Calu3 (cell line): ENCODE measurements at regions of chr7 and their contacts with region 1.

Region 1: DNA sequence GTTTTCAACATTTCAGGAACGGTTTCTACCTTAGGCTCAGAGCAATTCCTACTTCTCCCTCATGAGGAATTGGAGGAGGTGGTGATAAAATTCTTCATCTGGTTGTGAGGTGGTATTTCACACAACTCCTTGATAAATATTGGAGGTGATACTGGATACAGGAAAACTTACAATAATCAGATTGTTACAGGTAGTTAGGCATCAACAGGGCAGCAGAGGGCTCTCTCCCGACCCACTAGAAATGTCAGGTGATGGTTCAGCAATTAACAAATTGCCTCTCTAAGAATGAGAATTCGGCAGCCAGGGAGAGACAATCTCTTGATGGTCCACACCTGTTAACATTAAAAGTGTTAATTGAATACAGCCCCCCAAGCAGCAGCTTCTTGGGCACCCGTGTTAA is 22.6 kb downstream of the ZNF786 start:
- DNase-seq: peak; percentile 17
- H3K4me3 Mint-ChIP-seq: no peak overlapping the region
- H3K27ac Mint-ChIP-seq: no peak overlapping the region
- H3K4me1 Mint-ChIP-seq: no peaks in the 10 kb centered on the region
- H3K27me3 Mint-ChIP-seq: no peaks in the 10 kb centered on the region
- CTCF ChIP-seq: no peak

Region 2: DNA sequence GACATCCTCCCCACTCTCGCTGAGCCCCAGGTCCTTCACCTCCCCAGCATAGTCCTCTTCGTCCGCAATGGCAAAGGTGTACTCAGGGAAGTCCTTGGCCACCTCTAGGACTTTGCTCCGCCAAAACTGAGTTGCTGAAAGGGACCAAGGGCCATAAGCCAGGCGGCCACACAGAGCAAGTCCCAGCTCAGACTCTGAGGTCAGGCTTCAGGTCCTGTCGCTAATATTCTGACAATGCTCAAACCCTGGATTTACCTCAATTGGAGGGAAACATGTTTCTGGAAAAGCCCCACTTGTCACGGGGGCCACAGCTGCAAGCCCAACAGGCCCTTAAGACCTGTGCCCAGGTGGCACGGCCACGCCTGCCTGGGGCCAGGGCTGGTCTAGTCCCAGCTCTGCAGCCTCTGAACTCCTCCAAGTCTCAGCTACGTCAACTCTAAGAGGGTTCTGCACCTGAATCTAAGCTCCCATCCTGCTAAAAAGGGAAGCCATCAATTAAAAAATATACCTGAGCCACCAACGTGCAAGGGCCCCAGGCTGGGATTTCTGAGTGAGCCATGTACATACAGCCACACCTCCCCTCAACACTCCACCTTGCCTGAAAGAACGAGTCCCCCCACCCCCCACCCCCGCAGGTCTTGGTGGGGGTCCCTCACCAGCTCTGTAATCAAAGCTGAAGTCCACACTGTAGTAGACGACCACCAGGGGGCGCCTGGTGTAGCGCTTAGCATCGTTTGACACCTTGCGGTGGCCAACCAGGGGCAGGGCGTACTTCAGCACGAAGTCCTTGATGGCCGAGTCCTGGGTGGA is 62.4 kb before region 1 on chr7:
- CTCF ChIA-PET with region 1: interaction called, 24 read pairs
- intact Hi-C with region 1: loop called (anchors 2 kb)
- DNase-seq: peak; percentile 78
- H3K4me3 Mint-ChIP-seq: no peak overlapping the region
- H3K27ac Mint-ChIP-seq: peak overlapping the region; percentile 23
- H3K4me1 Mint-ChIP-seq: peaks cover 8% of the 10 kb centered on the region
- H3K27me3 Mint-ChIP-seq: no peaks in the 10 kb centered on the region
- CTCF ChIP-seq: peak; percentile 87

Region 3: GRCh38 chr7:149028346-149029109 is 39.3 kb before region 1 on chr7 and contains the start of gene PDIA4:
- CTCF ChIA-PET with region 1: interaction called, 7 read pairs
- intact Hi-C with region 1: loop called (anchors 2 kb)
- DNase-seq: peak; percentile 100
- H3K4me3 Mint-ChIP-seq: peak within 1 kb of the TSS; percentile 94
- H3K27ac Mint-ChIP-seq: peak within 1 kb of the TSS; percentile 98
- H3K4me1 Mint-ChIP-seq: peaks cover 17% of the 10 kb centered on the region
- H3K27me3 Mint-ChIP-seq: no peaks in the 10 kb centered on the region
- CTCF ChIP-seq: peak; percentile 26
- total RNA-seq, gene PDIA4: 332 and 351 TPM in 2 replicates